ENCODE measurements at regions of chr7 and their contacts with region 1.

Region 1: GRCh38 chr7:23712368-23713284 is 2.6 kb downstream of the STK31 start:
- DNase-seq: no peak
- H3K4me3 ChIP-seq: no peak overlapping the region
- H3K27ac ChIP-seq: no peak overlapping the region
- H3K4me1 ChIP-seq: no peaks in the 10 kb centered on the region
- H3K27me3 ChIP-seq: no peaks in the 10 kb centered on the region
- CTCF ChIP-seq: peak in 2 of 3 donors; percentile 55 to 65
- POLR2A ChIP-seq: no peak

Region 2: DNA sequence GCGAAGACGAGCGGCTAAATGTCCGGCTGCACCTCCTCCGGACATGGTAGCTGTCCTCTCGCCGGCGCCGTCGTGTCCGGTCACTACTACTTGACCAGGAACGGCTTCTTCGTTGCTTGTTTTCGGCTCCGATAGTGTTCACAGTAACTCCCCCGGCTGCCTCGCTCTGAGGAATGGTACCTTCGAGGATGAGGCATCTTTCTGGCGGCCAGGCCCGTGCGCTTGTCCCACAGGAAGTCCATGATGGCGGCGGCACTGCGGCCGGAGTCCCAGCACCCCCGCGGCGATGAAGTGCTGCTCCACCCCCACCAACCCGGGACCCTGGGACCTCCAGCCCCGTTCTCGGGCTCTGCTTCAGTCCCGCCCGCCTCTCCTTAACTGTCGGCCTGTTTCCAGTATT is 126.5 kb before region 1 on chr7:
- intact Hi-C with region 1: loop called (anchors 10 kb)
- DNase-seq: no peak
- H3K4me3 ChIP-seq: no peak overlapping the region
- H3K27ac ChIP-seq: no peak overlapping the region
- H3K4me1 ChIP-seq: no peaks in the 10 kb centered on the region
- H3K27me3 ChIP-seq: no peaks in the 10 kb centered on the region
- CTCF ChIP-seq: no peak
- POLR2A ChIP-seq: no peak

Region 3: DNA sequence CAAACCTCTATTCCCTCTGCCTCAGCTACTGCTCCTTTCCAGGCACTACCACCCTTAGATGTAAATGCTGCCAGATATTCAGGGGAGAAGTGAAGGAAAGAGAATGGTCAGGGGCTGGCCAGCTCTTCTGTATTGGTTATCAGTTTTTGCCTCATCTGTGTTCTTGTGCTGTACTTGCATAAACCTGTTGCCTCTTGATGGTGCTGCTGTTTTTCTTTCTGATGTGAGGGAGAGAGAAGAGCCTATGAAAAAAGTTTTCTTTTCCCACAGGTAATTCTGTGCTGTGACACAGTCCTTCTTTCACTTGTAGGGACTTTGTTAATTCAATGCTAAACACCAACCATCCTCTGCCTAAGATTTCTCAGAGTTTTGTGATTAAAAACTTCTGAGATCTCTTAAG is 54.9 kb after region 1 on chr7:
- intact Hi-C with region 1: no loop called
- DNase-seq: no peak
- H3K4me3 ChIP-seq: no peak overlapping the region
- H3K27ac ChIP-seq: no peak overlapping the region
- H3K4me1 ChIP-seq: no peaks in the 10 kb centered on the region
- H3K27me3 ChIP-seq: no peaks in the 10 kb centered on the region
- CTCF ChIP-seq: no peak
- POLR2A ChIP-seq: no peak

Region 4: DNA sequence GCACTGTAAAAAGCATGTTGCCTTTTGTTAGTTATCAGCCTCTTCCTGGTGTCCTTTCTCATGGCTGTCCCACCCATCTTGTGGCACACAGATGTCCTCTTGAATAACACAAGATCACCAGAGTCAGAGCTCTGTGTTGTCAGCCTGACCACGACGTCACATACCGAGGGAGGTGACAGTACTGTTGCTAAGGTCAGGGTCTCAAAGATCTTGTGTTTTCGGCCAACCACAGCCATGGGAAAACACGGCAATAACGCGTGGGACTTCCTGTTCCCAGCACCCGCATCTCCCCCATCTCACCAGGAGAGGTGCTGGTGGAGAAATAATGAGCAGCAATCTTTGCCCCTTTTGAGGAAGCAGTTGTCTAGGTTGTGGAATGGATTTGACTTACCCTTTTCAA is 1475.3 kb after region 1 on chr7:
- intact Hi-C with region 1: no loop called
- DNase-seq: no peak
- H3K4me3 ChIP-seq: no peak overlapping the region
- H3K27ac ChIP-seq: no peak overlapping the region
- H3K4me1 ChIP-seq: no peaks in the 10 kb centered on the region
- H3K27me3 ChIP-seq: no peaks in the 10 kb centered on the region
- CTCF ChIP-seq: no peak
- POLR2A ChIP-seq: no peak